ENCODE measurements at regions of chr2 and their contacts with region 1.

Region 1: DNA sequence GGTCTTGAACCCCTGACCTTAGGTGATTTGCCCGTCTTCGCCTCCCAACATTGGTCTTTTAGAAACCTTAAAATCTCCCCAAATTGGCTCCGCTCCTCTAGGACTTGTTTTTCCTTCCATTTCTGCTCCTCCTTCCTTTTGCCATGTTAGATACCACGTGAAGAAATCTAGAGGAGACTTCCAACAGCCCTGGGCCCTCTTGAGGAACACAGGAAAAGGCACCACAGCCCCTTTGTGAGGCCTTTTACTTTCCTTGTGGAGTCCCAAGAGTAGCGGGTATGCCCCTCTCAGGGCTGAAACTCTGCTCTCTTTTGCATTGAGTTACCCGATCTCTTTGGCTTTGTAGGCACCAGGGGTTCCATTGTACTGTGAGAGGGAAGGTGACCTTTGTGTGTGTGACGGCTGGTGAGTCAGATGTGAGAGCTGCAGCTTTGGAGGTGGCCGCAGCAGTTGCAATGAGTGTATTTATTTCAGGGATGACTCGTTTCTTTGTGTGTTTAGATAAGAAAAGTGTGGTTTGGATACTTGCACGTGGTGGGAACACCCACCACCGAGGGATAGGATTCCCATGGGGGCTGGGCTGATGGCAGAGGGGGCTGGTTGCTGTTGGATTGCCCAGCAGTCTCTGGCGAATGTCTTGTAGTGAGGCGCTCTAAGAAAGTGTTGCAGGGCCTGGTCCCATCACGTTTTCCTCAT is 218.4 kb upstream of the HS6ST1 start:
- DNase-seq: peak; percentile 99
- ATAC-seq: peak; percentile 91
- H3K4me3 ChIP-seq: no peak overlapping the region
- H3K27ac ChIP-seq: peak overlapping the region; percentile 79
- H3K4me1 ChIP-seq: peaks cover 8% of the 10 kb centered on the region
- H3K27me3 ChIP-seq: no peaks in the 10 kb centered on the region
- CTCF ChIP-seq: peak; percentile 17; the same call in 1 of the 2 replicates
- POLR2A ChIP-seq: peak; percentile 72; the same call in 1 of the 2 replicates
- RAD21 ChIP-seq: peak; percentile 37

Region 2: DNA sequence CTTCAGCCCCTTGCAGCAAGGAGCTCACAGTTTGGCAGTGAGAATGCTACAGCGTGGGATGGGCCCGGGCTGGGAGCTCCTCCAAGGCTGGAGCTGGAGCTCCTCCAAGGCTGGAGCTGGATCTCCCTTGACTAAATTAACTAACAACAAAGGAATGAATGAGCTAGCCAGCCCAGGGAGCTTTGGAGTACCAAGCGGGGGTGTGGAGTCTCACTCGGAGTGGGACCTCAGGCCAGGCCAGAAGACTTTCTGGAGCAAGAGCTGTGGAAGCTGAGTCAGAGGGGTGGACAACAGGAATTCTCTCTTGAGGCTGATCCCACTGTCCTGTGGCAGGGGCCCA is 26.2 kb after region 1 on chr2:
- CTCF ChIA-PET with region 1: interaction called, 3 read pairs
- POLR2A ChIA-PET with region 1: no interaction called
- dilution Hi-C with region 1: no loop called
- in situ Hi-C with region 1: no loop called
- intact Hi-C with region 1: loop called (anchors 1 kb)
- DNase-seq: peak; percentile 98
- ATAC-seq: peak; percentile 92
- H3K4me3 ChIP-seq: no peak overlapping the region
- H3K27ac ChIP-seq: peak overlapping the region; percentile 60; the same call in 1 of the 2 replicates
- H3K4me1 ChIP-seq: peaks cover 13% of the 10 kb centered on the region
- H3K27me3 ChIP-seq: no peaks in the 10 kb centered on the region
- CTCF ChIP-seq: no peak
- POLR2A ChIP-seq: no peak
- RAD21 ChIP-seq: peak; percentile 36

Region 3: GRCh38 chr2:128585706-128586105 is 48.6 kb after region 1 on chr2:
- CTCF ChIA-PET with region 1: no interaction called
- POLR2A ChIA-PET with region 1: no interaction called
- dilution Hi-C with region 1: no loop called
- in situ Hi-C with region 1: no loop called
- intact Hi-C with region 1: loop called (anchors 2 kb)
- DNase-seq: peak; percentile 98
- ATAC-seq: peak; percentile 96
- H3K4me3 ChIP-seq: no peak overlapping the region
- H3K27ac ChIP-seq: no peak overlapping the region
- H3K4me1 ChIP-seq: peaks cover 3% of the 10 kb centered on the region; the same call in 1 of the 2 replicates
- H3K27me3 ChIP-seq: no peaks in the 10 kb centered on the region
- CTCF ChIP-seq: no peak
- POLR2A ChIP-seq: no peak
- RAD21 ChIP-seq: peak; percentile 7

Measured in IMR-90 (cell line).